HEK293 (cell line): ENCODE measurements at regions of chr17 and their contacts with region 1.

Region 1: GRCh38 chr17:43483674-43484372 is at the start of gene DHX8:
- H3K4me3 ChIP-seq: peak within 1 kb of the TSS; percentile 77
- H3K27ac ChIP-seq: peak within 1 kb of the TSS; percentile 65
- H3K4me1 ChIP-seq: peaks cover 7% of the 10 kb centered on the region; the same call in 1 of the 2 replicates
- CTCF ChIP-seq: peak; percentile 100

Region 2: GRCh38 chr17:43316522-43317142 is 167.2 kb before region 1 on chr17:
- CTCF ChIA-PET with region 1: no interaction called
- POLR2A ChIA-PET with region 1: interaction called, 10 read pairs
- H3K4me3 ChIP-seq: no peak overlapping the region
- H3K27ac ChIP-seq: no peak overlapping the region
- H3K4me1 ChIP-seq: no peaks in the 10 kb centered on the region
- CTCF ChIP-seq: no peak

Region 3: DNA sequence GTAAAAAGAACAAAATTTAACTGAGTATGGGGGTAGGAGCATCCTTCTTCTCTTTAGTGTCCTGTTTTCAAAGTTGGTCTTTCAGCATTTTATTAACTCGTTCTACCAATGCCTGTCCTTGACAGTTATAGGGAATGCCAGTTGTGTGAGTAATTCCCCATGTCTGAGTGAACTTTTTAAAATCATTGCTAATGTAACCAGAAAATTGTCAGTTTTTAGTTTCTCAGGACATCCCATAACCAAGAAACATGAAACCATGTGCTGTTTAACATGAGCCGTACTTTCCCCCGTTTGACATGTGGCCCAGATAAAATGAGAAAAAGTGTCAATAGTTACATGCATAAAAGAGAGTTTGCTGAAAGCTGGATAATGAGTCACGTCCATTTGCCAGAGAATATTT is 156.4 kb before region 1 on chr17:
- CTCF ChIA-PET with region 1: no interaction called
- POLR2A ChIA-PET with region 1: no interaction called
- H3K4me3 ChIP-seq: no peak overlapping the region
- H3K27ac ChIP-seq: no peak overlapping the region
- H3K4me1 ChIP-seq: no peaks in the 10 kb centered on the region
- CTCF ChIP-seq: no peak

Region 4: DNA sequence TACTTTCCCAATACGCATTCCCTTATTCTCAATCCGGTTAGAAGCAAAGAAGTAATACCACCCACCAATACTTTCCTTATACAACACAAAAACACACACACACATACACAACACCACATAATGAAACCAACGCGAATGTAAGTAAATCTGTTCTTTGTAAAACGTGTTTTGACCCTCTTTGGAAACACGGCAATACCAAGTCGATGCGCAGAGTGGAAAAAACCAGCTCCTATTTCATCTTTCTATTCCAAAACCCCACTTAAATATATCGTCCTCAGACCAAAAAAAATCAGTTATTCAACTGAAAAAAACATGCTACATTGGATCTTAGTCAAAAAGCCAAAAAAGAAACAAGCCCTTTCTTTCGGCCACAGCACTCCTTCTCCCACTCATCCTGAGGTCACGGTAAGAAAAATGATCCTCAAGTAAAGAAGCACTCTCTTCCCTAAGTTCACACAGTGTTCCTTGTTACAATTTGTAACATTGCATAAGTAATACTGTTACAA is 116.0 kb before region 1 on chr17:
- CTCF ChIA-PET with region 1: interaction called, 12 read pairs
- POLR2A ChIA-PET with region 1: interaction called, 64 read pairs
- H3K4me3 ChIP-seq: no peak overlapping the region
- H3K27ac ChIP-seq: peak overlapping the region; percentile 99
- H3K4me1 ChIP-seq: peaks cover 20% of the 10 kb centered on the region; the same call in 1 of the 2 replicates
- CTCF ChIP-seq: no peak

Region 5: DNA sequence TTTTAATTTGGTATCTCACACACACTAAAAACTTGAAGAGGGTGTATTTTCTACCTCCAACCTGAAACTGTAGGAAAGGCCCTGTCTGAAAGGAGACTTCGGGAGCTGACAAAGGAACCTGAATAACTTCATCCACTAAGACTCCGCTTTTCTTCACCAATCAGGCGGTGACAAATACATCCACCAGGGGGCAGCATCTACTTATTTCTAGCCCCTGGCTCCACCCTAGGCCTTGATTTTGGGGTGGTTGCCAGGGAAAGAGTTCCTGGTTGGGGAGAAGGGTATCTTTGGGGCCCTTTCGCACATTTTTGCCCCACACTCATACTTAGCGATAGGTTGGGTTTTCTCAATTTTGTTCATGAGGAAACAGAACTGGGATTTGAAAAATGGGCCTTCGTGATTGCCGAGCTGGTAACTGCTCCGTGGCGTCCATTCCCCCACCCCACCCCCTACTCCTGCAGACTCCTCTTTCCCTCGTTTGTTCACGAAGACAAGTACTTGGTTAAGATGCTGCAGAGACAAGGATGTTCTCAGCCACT is 89.8 kb before region 1 on chr17:
- CTCF ChIA-PET with region 1: interaction called, 406 read pairs
- POLR2A ChIA-PET with region 1: interaction called, 76 read pairs
- H3K4me3 ChIP-seq: no peak overlapping the region
- H3K27ac ChIP-seq: no peak overlapping the region
- H3K4me1 ChIP-seq: 0 out of 2 replicates have a peak, but pooled peaks cover 3% of the 10 kb centered on the region
- CTCF ChIP-seq: peak; percentile 81

Region 6: DNA sequence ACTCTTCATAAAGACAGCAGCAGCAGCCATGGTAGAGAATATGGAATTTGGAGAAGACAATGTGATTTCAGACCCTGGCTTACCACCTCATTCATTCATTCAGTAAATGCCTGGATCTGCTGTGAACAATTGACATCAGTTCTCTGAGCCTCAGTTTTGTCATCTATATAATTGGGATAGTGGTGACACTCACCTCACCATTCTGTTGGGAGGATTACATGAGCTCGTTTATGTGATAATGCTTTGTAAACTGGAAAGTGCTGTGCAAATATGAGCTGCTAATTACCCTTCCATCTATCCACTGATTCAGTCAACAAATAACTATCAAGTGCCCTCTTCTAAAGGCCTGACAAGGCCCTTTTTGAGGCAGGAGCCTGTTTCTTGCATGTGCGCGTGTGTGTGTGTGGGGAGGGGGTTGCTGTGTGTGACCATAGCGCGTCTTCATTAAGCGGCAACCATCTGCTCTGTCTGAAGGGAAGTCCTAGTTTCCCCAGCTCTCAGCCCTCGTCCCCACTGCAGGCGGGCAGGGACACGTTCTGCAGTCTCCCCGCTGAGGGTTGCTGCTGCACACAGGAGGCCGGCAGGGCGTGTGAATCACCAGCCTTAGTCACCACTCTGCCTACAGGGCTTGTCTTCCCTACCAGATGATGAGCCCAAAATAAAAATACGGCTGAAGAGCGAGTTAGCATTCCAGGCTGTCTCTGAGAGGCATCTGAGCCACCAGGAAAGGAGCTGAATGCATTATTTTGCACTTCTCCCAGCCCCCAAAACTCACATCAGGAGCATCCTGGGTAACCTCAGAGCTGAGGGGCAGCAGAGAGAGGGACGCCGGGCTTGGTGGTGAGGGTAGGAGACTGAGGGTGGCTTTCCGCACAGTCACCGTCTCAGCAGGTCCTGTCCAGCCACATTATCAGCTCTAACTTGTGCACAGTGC is 65.1 kb before region 1 on chr17:
- CTCF ChIA-PET with region 1: interaction called, 12 read pairs
- POLR2A ChIA-PET with region 1: no interaction called
- H3K4me3 ChIP-seq: no peak overlapping the region
- H3K27ac ChIP-seq: no peak overlapping the region
- H3K4me1 ChIP-seq: no peaks in the 10 kb centered on the region
- CTCF ChIP-seq: no peak